PC-9 (cell line): ENCODE measurements at regions of chr9 and their contacts with region 1.

Region 1: GRCh38 chr9:76658535-76659231 is 105.6 kb upstream of the PCA3 start:
- DNase-seq: peak in 1 of 2 experiments; percentile 38
- H3K4me3 ChIP-seq: no peak overlapping the region
- H3K27ac ChIP-seq: no peak overlapping the region
- H3K4me1 ChIP-seq: peaks cover 8% of the 10 kb centered on the region; the same call in 1 of the 2 replicates
- H3K27me3 ChIP-seq: no peaks in the 10 kb centered on the region
- CTCF ChIP-seq: peak; percentile 70

Region 2: GRCh38 chr9:75615284-75615683 is 1043.4 kb before region 1 on chr9:
- CTCF ChIA-PET with region 1: no interaction called
- POLR2A ChIA-PET with region 1: no interaction called
- intact Hi-C with region 1: no loop called
- DNase-seq: peak in 1 of 2 experiments; percentile 64
- H3K4me3 ChIP-seq: no peak overlapping the region
- H3K27ac ChIP-seq: no peak overlapping the region
- H3K4me1 ChIP-seq: peaks cover 11% of the 10 kb centered on the region; the same call in 1 of the 2 replicates
- H3K27me3 ChIP-seq: no peaks in the 10 kb centered on the region
- CTCF ChIP-seq: no peak

Region 3: DNA sequence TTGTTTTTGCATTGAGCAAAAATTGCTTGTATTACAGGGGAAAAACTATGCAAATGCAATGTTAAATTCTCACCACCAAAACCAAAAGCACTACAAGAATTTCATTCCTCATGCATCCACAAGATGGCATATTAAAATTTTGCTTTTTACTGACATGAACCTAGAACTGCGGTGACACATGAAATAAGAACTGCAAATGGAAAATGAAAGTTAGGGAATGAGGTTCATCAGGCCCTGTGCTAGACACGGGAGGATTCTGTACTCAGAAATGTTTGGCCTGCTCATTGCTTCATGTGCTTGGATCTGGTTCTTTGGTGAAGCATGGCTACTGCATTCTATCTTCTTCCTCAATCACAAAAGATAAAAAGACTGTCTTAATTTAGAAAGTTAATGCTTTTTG is 255.3 kb before region 1 on chr9:
- CTCF ChIA-PET with region 1: interaction called, 4 read pairs
- POLR2A ChIA-PET with region 1: no interaction called
- intact Hi-C with region 1: loop called (anchors 1 kb)
- DNase-seq: peak in 1 of 2 experiments; percentile 68
- H3K4me3 ChIP-seq: 0 out of 2 replicates have a peak overlapping the region, but pooled peaks have one; percentile 15
- H3K27ac ChIP-seq: no peak overlapping the region
- H3K4me1 ChIP-seq: peaks cover 37% of the 10 kb centered on the region
- H3K27me3 ChIP-seq: no peaks in the 10 kb centered on the region
- CTCF ChIP-seq: peak; percentile 58; the same call in 1 of the 2 replicates

Region 4: GRCh38 chr9:76516350-76516749 is 142.3 kb before region 1 on chr9:
- CTCF ChIA-PET with region 1: no interaction called
- POLR2A ChIA-PET with region 1: no interaction called
- intact Hi-C with region 1: loop called (anchors 5 kb)
- DNase-seq: no peak
- H3K4me3 ChIP-seq: no peak overlapping the region
- H3K27ac ChIP-seq: no peak overlapping the region
- H3K4me1 ChIP-seq: peaks cover 28% of the 10 kb centered on the region
- H3K27me3 ChIP-seq: no peaks in the 10 kb centered on the region
- CTCF ChIP-seq: no peak

Region 5: DNA sequence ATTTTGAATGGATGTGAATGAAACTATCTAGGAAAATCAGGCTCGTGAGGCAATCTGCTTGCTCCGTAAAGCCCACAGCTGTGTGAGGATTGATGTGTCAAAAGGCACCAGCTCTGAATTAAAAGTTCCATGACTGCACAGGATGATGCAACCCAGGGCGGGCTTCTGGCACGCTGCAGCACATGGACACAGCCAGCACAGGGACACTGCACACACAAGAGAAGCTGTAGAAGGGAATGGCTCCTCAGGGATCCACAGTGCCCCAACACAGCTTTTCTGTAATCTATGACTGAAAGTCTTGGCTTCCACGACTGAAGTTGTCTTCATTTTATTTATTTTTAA is 48.7 kb before region 1 on chr9:
- CTCF ChIA-PET with region 1: no interaction called
- POLR2A ChIA-PET with region 1: no interaction called
- intact Hi-C with region 1: no loop called
- DNase-seq: no peak
- H3K4me3 ChIP-seq: no peak overlapping the region
- H3K27ac ChIP-seq: no peak overlapping the region
- H3K4me1 ChIP-seq: no peaks in the 10 kb centered on the region
- H3K27me3 ChIP-seq: no peaks in the 10 kb centered on the region
- CTCF ChIP-seq: no peak

Region 6: DNA sequence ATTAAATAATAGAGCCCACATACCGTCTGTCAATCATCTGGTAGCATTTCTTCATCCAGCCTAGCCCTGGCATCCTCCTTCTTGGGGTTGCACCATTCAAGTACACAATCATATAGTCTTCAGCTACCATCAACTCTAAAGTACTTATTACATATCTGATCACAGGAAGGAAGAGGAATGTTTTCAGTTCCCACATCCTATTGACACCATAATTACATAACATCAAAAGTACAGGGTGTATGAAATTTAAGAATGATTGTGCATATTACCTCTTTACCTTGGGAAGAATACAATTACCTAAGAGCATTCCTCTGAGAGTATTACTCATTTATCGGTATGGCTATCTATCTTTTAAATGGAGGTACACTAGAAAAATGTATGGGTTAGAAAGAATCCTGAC is 21.3 kb before region 1 on chr9:
- CTCF ChIA-PET with region 1: interaction called, 13 read pairs
- POLR2A ChIA-PET with region 1: interaction called, 4 read pairs
- intact Hi-C with region 1: no loop called
- DNase-seq: peak in 1 of 2 experiments; percentile 77
- H3K4me3 ChIP-seq: no peak overlapping the region
- H3K27ac ChIP-seq: no peak overlapping the region
- H3K4me1 ChIP-seq: peaks cover 16% of the 10 kb centered on the region
- H3K27me3 ChIP-seq: no peaks in the 10 kb centered on the region
- CTCF ChIP-seq: no peak

Region 7: DNA sequence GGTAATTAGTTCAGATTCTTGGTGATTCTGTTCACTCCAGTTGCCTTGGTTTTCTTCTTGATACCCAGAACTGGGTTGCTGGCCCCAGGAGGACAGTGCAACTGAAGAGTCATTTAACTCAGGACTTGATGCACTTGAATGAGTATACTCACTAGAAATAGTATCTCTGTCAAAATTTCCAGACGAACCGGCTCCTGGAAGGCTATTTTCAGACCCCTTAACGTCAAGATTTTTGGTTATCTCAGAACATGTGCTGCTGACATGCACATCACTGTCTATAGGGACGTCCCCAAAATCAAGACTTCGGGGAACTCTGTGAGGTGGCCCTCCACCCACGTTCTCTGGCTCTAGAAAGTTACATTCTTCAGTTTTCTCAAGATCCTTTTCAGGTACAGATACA is 48.8 kb after region 1 on chr9:
- CTCF ChIA-PET with region 1: no interaction called
- POLR2A ChIA-PET with region 1: no interaction called
- intact Hi-C with region 1: no loop called
- DNase-seq: no peak
- H3K4me3 ChIP-seq: no peak overlapping the region
- H3K27ac ChIP-seq: no peak overlapping the region
- H3K4me1 ChIP-seq: no peaks in the 10 kb centered on the region
- H3K27me3 ChIP-seq: peaks cover 73% of the 10 kb centered on the region
- CTCF ChIP-seq: no peak